Uterus (tissue), 4 donors: ENCODE measurements at regions of chr15 and their contacts with region 1.

Region 1: DNA sequence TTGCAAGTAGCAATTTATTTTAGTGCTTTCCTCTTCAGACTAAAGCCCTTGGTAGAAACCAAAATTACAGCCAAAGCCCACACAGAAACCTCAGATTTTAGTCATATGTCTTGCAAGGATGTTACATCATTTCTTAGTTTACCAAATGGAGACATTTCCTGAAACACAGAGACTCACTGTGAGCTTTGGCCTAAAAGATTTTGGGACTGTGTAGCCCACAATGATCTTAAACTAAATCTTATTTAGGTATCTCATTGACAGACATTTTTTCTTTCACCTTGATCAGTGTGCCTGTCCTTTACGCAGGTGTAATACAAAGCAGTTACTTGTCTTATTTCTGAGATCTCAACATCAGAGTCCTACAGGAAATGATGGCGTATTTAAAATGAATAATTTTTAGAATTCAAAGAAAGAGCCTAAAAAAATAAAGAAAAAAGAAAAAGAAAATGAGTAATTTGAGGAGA is 27.8 kb upstream of the AP4E1 start:
- DNase-seq: no peak
- H3K4me3 ChIP-seq: no peak overlapping the region
- H3K27ac ChIP-seq: no peak overlapping the region
- H3K4me1 ChIP-seq: no peaks in the 10 kb centered on the region
- H3K27me3 ChIP-seq: no peaks in the 10 kb centered on the region
- CTCF ChIP-seq: no peak
- POLR2A ChIP-seq: no peak

Region 2: GRCh38 chr15:50686468-50687301 is 194.0 kb before region 1 on chr15 and contains the start of gene TRPM7:
- intact Hi-C with region 1: loop called (anchors 10 kb)
- DNase-seq: peak; percentile 81 to 88
- H3K4me3 ChIP-seq: peak within 1 kb of the TSS; percentile 72 to 87
- H3K27ac ChIP-seq: peak within 1 kb of the TSS; percentile 96 to 98
- H3K4me1 ChIP-seq: peaks cover 0 to 9% of the 10 kb centered on the region in 2 donors
- H3K27me3 ChIP-seq: no peaks in the 10 kb centered on the region
- CTCF ChIP-seq: peak in 3 of 4 experiments; percentile 4 to 13 (median 11)
- POLR2A ChIP-seq: peak; percentile 61 to 79
- total RNA-seq, gene TRPM7: 46.2 to 755 (median 83.5) TPM

Region 3: GRCh38 chr15:50702762-50703334 is 177.8 kb before region 1 on chr15:
- intact Hi-C with region 1: no loop called
- DNase-seq: no peak
- H3K4me3 ChIP-seq: no peak overlapping the region
- H3K27ac ChIP-seq: no peak overlapping the region
- H3K4me1 ChIP-seq: no peaks in the 10 kb centered on the region
- H3K27me3 ChIP-seq: no peaks in the 10 kb centered on the region
- CTCF ChIP-seq: no peak
- POLR2A ChIP-seq: no peak

Region 4: DNA sequence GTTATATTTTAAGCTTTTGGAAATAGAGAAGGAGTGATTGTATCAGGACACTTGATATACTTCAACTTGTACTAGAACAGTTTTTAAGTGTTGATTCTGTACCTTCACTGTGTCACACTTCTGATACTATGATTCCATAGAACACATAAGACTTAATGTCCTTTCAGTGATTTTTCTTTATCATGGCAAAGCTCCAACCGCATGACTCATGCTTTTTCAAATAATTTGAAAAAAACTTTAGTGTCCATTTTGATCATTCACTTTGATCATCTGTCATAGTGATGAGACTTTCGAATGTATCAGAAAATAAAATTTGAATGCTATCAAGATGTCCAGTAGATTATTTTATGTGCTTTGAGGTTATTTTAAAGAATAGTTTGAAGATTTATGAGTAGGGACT is 59.8 kb after region 1 on chr15:
- intact Hi-C with region 1: no loop called
- DNase-seq: no peak
- H3K4me3 ChIP-seq: no peak overlapping the region
- H3K27ac ChIP-seq: no peak overlapping the region
- H3K4me1 ChIP-seq: no peaks in the 10 kb centered on the region
- H3K27me3 ChIP-seq: no peaks in the 10 kb centered on the region
- CTCF ChIP-seq: no peak
- POLR2A ChIP-seq: no peak

Region 5: GRCh38 chr15:51051776-51052175 is 171.1 kb after region 1 on chr15:
- intact Hi-C with region 1: no loop called
- DNase-seq: no peak
- H3K4me3 ChIP-seq: no peak overlapping the region
- H3K27ac ChIP-seq: peak overlapping the region; percentile 5 to 9
- H3K4me1 ChIP-seq: peaks cover 0 to 10% of the 10 kb centered on the region in 2 donors
- H3K27me3 ChIP-seq: no peaks in the 10 kb centered on the region
- CTCF ChIP-seq: no peak
- POLR2A ChIP-seq: no peak